ENCODE measurements at regions of chr11 and their contacts with region 1.

Region 1: GRCh38 chr11:128342511-128343134 is 244.7 kb downstream of the ETS1 start:
- DNase-seq: peak; percentile 30 to 75
- ATAC-seq: peak; percentile 86 to 96 (median 92)
- H3K4me3 ChIP-seq: no peak overlapping the region
- H3K27ac ChIP-seq: peak overlapping the region in 9 of 10 donors; percentile 61 to 83 (median 76)
- H3K4me1 ChIP-seq: peaks cover 0 to 43% (median 34%) of the 10 kb centered on the region in 9 donors
- H3K27me3 ChIP-seq: no peaks in the 10 kb centered on the region
- CTCF ChIP-seq: no peak

Region 2: DNA sequence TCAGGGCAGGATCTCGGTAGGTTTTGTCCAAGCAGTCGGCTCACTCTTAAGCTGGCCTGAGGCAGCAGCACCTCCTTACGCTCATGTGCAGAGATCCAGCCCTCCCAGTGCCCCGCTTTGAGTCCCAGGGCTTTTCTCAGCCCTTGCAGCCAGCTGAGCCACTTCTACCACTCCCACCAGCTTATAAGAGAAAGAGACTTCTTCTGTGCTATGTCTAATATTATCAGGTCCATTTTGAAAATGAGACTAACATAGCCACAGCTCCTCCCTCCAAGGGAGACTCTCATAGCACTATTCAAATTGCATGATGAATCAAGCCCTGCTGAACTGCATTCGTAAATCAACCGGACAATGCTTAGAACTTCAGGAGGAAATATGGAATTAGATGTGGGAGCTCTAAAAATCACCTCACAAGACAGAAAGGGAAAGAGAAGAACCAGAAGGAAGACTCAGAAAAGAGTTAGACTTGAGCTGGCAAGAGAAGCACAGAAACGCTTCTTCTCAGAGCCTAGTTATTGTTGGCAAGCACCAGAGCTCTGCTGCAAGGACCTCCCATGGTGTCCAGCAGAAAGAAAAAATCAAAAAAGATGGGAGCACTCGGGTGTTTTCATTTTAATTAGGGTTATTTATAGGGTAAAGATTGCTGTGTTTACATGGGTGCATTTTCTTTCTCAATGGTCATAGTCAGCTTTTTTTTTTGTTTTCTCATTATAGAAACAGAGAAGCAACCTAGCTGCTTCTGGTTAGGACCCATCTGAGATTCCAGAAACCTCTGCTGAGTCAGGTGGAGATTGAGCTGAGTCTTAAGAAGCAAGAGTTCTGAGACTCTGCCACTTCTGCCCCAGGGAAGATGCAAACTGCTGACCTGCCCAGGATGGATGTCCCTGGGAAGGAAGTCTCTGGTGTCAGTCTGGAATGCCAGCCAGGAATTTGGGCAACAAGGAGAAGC is 63.4 kb after region 1 on chr11:
- intact Hi-C with region 1: loop called in 1 of 10 experiments (anchors 5 kb)
- DNase-seq: no peak
- ATAC-seq: peak in 6 of 8 donors; percentile 33 to 61 (median 48)
- H3K4me3 ChIP-seq: peak overlapping the region in 1 of 10 donors; percentile 6
- H3K27ac ChIP-seq: peak overlapping the region in 7 of 10 donors; percentile 9 to 64 (median 19)
- H3K4me1 ChIP-seq: peaks cover 2 to 44% (median 23%) of the 10 kb centered on the region in 9 donors
- H3K27me3 ChIP-seq: no peaks in the 10 kb centered on the region
- CTCF ChIP-seq: peak in 1 of 9 donors; percentile 15